ENCODE measurements at regions of chrX and their contacts with region 1.

Region 1: DNA sequence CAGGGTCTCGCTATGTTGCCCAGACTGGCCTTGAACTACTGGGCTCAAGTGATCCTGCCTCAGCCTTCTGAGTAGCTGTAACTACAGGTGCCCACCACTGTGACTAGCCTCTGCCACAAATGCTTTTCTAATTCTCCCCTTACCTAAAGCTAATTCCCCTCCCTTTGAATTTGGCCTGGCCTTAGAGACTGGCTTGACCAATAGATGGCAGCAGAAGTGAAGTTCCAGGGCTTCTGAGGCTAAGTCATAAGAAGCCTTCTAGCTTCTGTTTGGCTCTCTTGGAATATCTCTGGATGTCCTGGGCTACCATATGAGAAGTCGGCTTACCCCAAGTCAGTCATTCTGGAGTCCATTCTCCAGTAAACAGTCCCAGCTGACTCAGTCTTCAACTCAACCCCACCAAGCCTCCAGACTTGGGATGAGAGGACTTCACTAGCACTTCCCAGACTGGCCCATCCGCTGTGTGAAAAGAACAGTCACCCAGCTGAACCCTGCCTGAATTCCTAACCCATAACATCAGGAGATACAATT is 61.0 kb downstream of the HPRT1 start:
- DNase-seq: peak; percentile 74
- H3K4me3 Mint-ChIP-seq: no peak overlapping the region
- H3K27ac Mint-ChIP-seq: peak overlapping the region; percentile 59
- H3K4me1 Mint-ChIP-seq: no peaks in the 10 kb centered on the region
- H3K27me3 Mint-ChIP-seq: peaks cover 16% of the 10 kb centered on the region
- CTCF ChIP-seq: peak; percentile 79

Region 2: GRCh38 chrX:134137341-134137740 is 383.6 kb before region 1 on chrX:
- CTCF ChIA-PET with region 1: no interaction called
- POLR2A ChIA-PET with region 1: no interaction called
- intact Hi-C with region 1: no loop called
- DNase-seq: no peak
- H3K4me3 Mint-ChIP-seq: no peak overlapping the region
- H3K27ac Mint-ChIP-seq: no peak overlapping the region
- H3K4me1 Mint-ChIP-seq: no peaks in the 10 kb centered on the region
- H3K27me3 Mint-ChIP-seq: peaks cover 70% of the 10 kb centered on the region
- CTCF ChIP-seq: no peak

Region 3: GRCh38 chrX:134272137-134272536 is 248.8 kb before region 1 on chrX:
- CTCF ChIA-PET with region 1: no interaction called
- POLR2A ChIA-PET with region 1: no interaction called
- intact Hi-C with region 1: no loop called
- DNase-seq: no peak
- H3K4me3 Mint-ChIP-seq: no peak overlapping the region
- H3K27ac Mint-ChIP-seq: no peak overlapping the region
- H3K4me1 Mint-ChIP-seq: no peaks in the 10 kb centered on the region
- H3K27me3 Mint-ChIP-seq: peaks cover 44% of the 10 kb centered on the region
- CTCF ChIP-seq: no peak

Region 4: DNA sequence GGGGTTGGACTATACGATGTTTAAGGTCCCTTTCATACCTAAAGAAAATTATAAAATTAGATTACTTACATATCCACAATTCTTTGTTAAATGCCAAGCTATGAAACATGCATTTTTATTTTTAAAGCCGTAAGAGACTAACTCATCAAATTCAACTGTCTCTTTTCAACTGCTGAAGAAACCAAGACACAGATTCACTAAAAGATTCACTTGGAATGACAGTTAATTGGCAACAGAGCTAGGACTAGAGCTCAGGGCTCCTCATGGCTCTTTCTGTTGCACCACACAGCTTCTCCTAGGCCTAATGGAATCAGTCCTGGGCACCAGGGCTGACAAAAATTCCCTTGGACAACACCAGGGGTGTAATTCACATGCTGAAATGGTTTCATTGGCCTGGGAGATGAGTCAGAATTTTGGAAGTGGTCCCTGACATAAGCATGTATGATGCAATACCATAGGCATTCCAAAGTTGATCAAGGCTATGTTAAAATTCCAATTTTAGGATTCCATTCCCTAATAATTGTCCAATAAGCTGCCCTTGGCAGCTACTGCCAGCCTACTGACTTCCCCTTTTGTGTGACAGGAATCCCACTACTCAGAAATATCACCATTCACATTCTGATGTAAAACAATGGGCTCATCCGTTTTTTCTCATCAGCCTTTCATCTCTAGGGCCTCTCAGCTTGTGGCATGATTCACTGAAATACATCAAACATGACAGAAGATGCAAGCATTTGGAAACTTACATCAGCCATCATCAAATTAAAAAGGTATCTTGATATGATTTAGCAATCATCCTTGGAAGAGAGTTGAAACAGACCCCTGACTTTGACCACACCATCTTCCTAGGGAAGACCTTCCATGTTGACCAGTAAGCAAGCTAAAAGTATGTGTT is 83.1 kb after region 1 on chrX:
- CTCF ChIA-PET with region 1: interaction called, 8 read pairs
- POLR2A ChIA-PET with region 1: no interaction called
- intact Hi-C with region 1: loop called (anchors 5 kb)
- DNase-seq: peak; percentile 94
- H3K4me3 Mint-ChIP-seq: no peak overlapping the region
- H3K27ac Mint-ChIP-seq: peak overlapping the region; percentile 3
- H3K4me1 Mint-ChIP-seq: peaks cover 8% of the 10 kb centered on the region
- H3K27me3 Mint-ChIP-seq: peaks cover 6% of the 10 kb centered on the region
- CTCF ChIP-seq: peak; percentile 15

Region 5: GRCh38 chrX:134718105-134718965 is 197.4 kb after region 1 on chrX:
- CTCF ChIA-PET with region 1: interaction called, 3 read pairs
- POLR2A ChIA-PET with region 1: no interaction called
- intact Hi-C with region 1: loop called (anchors 1 kb)
- DNase-seq: peak; percentile 91
- H3K4me3 Mint-ChIP-seq: no peak overlapping the region
- H3K27ac Mint-ChIP-seq: peak overlapping the region; percentile 84
- H3K4me1 Mint-ChIP-seq: peaks cover 10% of the 10 kb centered on the region
- H3K27me3 Mint-ChIP-seq: no peaks in the 10 kb centered on the region
- CTCF ChIP-seq: no peak

Region 6: DNA sequence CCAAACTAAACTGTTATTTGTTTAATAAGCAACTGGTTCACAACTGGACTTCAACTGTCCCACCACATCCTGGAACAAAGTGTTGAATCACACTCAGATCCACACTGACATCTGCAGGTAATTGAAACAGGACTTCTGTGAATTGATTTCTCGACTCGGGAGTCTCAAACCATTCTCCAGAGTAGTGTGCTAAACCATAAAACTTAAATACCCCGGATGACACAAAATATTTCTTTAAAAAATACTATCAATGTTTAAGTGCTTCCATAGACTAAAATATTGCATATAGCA is 232.7 kb after region 1 on chrX:
- CTCF ChIA-PET with region 1: interaction called, 51 read pairs
- POLR2A ChIA-PET with region 1: no interaction called
- intact Hi-C with region 1: loop called (anchors 1 kb)
- DNase-seq: peak; percentile 31
- H3K4me3 Mint-ChIP-seq: no peak overlapping the region
- H3K27ac Mint-ChIP-seq: no peak overlapping the region
- H3K4me1 Mint-ChIP-seq: no peaks in the 10 kb centered on the region
- H3K27me3 Mint-ChIP-seq: peaks cover 42% of the 10 kb centered on the region
- CTCF ChIP-seq: peak; percentile 26

Region 7: DNA sequence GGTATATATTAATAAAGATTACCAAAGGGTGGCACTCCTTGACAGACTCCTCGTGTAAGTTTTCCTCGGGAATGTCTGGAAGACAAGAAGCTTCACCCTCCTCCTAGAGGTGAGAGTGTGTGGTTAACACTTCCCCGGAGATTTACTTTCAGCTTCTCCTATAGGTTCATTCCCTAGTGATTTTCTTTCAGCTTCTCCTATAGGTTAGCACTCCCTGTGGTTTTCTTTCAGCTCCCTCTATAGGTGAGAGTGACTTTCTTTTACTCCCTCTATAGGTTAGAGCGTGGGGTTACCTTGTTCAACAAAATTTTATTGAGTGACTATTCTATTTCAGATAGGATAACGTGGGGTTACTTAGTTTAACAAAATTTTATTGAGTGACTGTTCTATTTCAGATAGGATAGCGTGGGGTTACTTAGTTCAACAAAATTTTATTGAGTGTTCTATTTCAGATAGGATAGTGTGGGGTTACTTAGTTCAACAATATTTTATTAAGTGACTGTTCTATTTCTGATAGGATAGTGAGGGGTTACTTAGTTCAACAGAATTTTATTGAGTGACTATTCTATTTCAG is 243.4 kb after region 1 on chrX:
- CTCF ChIA-PET with region 1: interaction called, 27 read pairs
- POLR2A ChIA-PET with region 1: no interaction called
- intact Hi-C with region 1: no loop called
- DNase-seq: peak; percentile 65
- H3K4me3 Mint-ChIP-seq: no peak overlapping the region
- H3K27ac Mint-ChIP-seq: no peak overlapping the region
- H3K4me1 Mint-ChIP-seq: peaks cover 7% of the 10 kb centered on the region
- H3K27me3 Mint-ChIP-seq: peaks cover 13% of the 10 kb centered on the region
- CTCF ChIP-seq: peak; percentile 21

Region 8: DNA sequence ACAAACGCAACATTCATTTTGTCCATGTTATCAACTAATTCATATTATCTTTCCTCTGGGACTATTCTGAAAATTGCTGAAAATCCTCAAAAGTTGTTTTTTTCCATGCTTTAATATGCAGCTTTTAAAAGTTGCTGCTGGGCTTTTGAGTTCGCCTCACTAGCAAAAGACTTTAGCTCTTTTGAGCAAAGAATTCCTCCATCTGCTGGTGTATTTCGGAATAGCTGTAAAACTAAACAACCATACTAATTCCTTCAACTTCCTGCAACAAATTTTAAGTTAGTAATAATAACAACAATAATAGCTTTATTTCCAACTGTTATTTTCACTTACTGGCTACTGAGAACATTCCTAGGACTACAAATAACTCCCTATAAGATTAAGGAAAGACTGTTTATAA is 261.9 kb after region 1 on chrX:
- CTCF ChIA-PET with region 1: interaction called, 141 read pairs
- POLR2A ChIA-PET with region 1: interaction called, 5 read pairs
- intact Hi-C with region 1: loop called (anchors 1 kb)
- DNase-seq: peak; percentile 48
- H3K4me3 Mint-ChIP-seq: no peak overlapping the region
- H3K27ac Mint-ChIP-seq: no peak overlapping the region
- H3K4me1 Mint-ChIP-seq: no peaks in the 10 kb centered on the region
- H3K27me3 Mint-ChIP-seq: peaks cover 18% of the 10 kb centered on the region
- CTCF ChIP-seq: peak; percentile 51

Region 9: DNA sequence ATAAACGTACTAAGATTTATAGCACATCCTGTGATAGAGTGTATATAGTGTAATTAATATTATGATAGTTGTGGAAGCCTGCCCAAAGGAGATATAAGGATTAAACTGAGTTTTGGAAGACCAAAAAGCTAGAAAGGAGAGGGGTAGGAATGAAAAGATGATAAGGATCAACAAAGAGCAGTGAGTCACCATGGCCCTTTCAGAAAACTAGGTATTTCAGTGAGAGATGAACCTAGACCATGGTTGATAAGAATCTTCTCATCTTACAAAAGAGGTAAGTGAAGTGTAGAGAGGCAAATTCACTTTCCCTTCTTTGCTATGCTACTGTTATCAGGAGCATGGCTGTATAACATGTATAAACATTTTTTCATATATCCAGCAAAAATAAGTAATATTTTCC is 271.2 kb after region 1 on chrX:
- CTCF ChIA-PET with region 1: interaction called, 141 read pairs
- POLR2A ChIA-PET with region 1: no interaction called
- intact Hi-C with region 1: no loop called
- DNase-seq: no peak
- H3K4me3 Mint-ChIP-seq: no peak overlapping the region
- H3K27ac Mint-ChIP-seq: no peak overlapping the region
- H3K4me1 Mint-ChIP-seq: peaks cover 6% of the 10 kb centered on the region
- H3K27me3 Mint-ChIP-seq: peaks cover 64% of the 10 kb centered on the region
- CTCF ChIP-seq: no peak

Measured in MCF 10A (cell line).